ENCODE measurements at regions of chr18 and their contacts with region 1.

Region 1: DNA sequence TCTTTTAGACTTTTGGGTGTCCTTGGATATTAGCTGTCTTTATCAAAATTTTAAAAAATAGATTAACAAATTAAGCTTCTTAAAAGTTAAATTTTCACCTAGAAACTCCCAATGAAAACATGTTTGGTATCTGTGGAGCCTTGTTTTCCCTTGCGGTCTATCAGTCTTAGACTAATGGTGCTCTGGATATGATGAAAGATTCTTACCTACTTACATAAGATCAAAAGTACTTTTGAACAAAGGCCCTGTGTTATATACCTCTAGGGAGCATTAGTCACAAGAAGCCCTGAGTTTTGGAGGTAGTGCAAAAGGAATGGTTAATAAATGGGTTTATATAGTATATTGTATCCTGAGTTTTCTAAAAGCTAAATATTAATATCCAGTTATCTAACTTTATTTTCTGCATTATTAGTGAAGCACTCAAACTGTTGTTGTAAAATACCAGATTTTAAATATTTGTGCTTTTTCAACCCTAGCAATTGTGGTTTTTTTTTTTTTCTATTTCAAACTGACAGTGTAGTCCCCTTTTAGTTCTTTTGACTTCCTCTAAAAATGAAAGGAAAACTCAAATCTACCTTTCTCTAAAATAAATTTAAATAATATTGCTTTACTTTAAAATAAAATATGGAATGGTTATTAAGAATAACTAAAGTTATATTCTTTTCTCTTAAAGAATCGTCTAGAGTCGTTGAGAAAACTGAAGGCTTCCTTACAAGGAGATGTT is 18.1 kb downstream of the NDC80 start:
- DNase-seq: no peak
- H3K4me3 ChIP-seq: peak overlapping the region in 2 of 4 donors; percentile 18 to 29
- H3K27ac ChIP-seq: peak overlapping the region in 1 of 4 donors; percentile 22
- H3K4me1 ChIP-seq: no peaks in the 10 kb centered on the region
- H3K27me3 ChIP-seq: no peaks in the 10 kb centered on the region
- CTCF ChIP-seq: no peak
- EP300 ChIP-seq: no peak
- POLR2A ChIP-seq: no peak

Region 2: DNA sequence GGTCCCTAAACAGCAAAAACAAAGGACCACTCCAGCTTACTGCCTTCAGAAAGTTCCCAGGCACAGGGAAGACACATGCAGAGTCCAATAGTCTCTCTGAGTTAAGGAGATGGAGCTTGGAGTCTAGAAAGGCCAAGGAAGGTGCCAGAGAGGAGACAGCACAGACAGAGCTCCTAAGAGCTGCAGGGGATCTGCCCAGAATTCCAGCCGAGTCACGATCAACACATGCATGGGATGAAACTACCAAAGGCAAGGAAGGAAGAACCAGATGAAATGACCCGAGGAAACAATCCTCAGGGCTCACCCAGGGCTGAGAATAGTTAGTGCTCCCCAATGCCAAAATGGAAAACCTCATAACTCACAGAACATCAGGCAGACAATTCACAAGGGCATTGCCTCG is 33.6 kb before region 1 on chr18:
- intact Hi-C with region 1: loop called (anchors 2 kb)
- DNase-seq: no peak
- H3K4me3 ChIP-seq: no peak overlapping the region
- H3K27ac ChIP-seq: no peak overlapping the region
- H3K4me1 ChIP-seq: no peaks in the 10 kb centered on the region
- H3K27me3 ChIP-seq: no peaks in the 10 kb centered on the region
- CTCF ChIP-seq: no peak
- EP300 ChIP-seq: no peak
- POLR2A ChIP-seq: no peak

Region 3: GRCh38 chr18:2857491-2858131 is 268.1 kb after region 1 on chr18:
- intact Hi-C with region 1: no loop called
- DNase-seq: peak; percentile 97
- H3K4me3 ChIP-seq: no peak overlapping the region
- H3K27ac ChIP-seq: peak overlapping the region; percentile 50 to 67 (median 58)
- H3K4me1 ChIP-seq: peaks cover 8 to 40% (median 22%) of the 10 kb centered on the region in 4 donors
- H3K27me3 ChIP-seq: no peaks in the 10 kb centered on the region
- CTCF ChIP-seq: no peak
- EP300 ChIP-seq: no peak
- POLR2A ChIP-seq: no peak

Measured in esophagus muscularis mucosa (tissue), 4 donors.